HEK293T (cell line): ENCODE measurements at regions of chr17 and their contacts with region 1.

Region 1: GRCh38 chr17:74305865-74306654 is 20.0 kb upstream of the KIF19 start:
- DNase-seq: no peak

Region 2: DNA sequence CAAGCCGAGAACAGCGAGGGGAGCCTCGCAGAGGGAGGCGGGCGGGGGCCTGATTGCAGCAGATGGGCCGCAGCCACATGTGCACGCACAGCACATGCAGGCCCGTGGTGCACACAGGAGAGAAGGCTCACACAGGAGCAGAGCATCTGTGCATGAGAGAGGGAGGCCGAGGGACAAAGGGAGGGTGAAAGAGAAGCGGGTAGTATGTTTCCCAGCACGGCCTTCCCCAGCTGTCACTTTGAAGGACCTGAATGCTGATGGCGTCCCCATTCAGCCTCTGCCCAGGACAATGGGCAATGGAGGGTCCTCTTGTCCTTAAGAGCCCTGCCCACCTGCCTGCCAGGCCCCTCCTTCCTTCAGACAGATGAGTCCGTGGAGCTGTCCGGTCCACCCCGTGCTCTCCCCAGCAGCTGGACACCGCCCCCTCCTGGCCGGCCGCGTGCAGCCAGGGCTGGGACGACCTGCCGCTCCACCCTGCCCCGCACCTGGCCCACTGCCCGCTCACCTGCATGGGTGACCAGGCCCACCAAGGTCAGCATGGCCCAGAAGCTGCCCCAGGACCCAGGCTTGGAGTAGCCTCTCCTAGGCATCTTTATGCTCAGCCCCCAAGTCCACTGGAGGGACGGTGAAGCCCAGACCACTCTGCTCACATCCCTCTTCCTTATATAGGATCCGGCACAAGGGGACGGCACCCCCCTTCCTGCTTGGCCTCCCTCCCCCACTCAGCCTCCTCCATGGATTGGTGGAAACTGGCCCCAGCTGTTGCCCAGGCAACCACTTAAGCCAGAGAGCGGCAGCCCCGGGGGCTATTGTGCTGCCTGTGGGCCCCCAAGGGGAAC is 55.4 kb after region 1 on chr17 and contains the start of gene BTBD17:
- CTCF ChIA-PET with region 1: interaction called, 10 read pairs
- POLR2A ChIA-PET with region 1: no interaction called
- DNase-seq: peak; percentile 77